ENCODE measurements at regions of chr6 and their contacts with region 1.

Region 1: DNA sequence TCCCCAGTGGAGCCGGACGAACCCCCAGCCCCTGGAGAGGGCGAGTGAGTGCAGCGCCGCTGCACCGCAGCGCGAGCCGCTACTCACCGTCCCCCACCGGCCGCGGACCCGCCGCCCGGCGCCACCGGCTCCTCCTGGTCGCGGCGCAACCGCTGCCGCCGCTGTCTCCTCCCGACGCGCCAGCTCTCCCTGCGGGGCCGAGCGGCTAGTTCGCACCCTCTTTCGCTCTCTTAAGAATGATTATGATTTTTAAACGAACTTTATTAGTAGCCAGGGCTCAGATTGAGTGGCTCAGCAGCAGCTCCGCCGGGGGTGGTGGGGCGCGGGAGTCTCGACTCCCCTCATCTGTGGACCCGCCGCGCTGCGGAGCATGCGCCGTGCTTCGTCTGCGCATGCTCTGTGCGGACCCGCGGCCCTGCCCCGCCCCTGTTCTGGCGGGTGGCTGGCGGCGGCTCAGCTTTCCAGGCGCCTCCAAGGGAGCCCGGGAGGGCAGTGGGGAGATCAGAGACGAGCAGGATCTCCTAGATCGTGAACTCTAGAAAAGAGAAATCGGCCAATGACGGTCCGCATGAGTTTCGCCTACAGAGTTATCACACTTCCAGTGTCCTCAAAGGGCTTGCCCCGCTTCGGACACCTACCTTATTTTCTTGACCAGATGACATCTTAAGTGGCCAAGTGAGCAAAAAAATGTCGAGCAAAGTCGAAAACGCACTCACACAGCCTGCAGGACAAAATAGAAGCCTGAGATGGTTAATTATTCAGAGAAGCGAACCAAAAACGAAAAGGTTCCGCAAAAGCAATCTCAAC is at the start of gene RAB23:
- DNase-seq: peak; percentile 70 to 94 (median 87)
- ATAC-seq: peak; percentile 92
- H3K4me3 ChIP-seq: peak within 1 kb of the TSS; percentile 86
- H3K4me3 Mint-ChIP-seq: peak within 1 kb of the TSS; percentile 89 to 100 (median 98)
- H3K27ac ChIP-seq: peak within 1 kb of the TSS; percentile 68
- H3K27ac Mint-ChIP-seq: peak within 1 kb of the TSS; percentile 85 to 95 (median 91)
- H3K4me1 ChIP-seq: no peaks in the 10 kb centered on the region
- H3K4me1 Mint-ChIP-seq: peaks cover 0 to 24% (median 10%) of the 10 kb centered on the region in 7 donors
- H3K27me3 ChIP-seq: no peaks in the 10 kb centered on the region
- H3K27me3 Mint-ChIP-seq: peaks cover 6 to 43% (median 13%) of the 10 kb centered on the region in 5 donors
- total RNA-seq, gene RAB23: 0.50 to 3.2 (median 2.0) TPM

Region 2: DNA sequence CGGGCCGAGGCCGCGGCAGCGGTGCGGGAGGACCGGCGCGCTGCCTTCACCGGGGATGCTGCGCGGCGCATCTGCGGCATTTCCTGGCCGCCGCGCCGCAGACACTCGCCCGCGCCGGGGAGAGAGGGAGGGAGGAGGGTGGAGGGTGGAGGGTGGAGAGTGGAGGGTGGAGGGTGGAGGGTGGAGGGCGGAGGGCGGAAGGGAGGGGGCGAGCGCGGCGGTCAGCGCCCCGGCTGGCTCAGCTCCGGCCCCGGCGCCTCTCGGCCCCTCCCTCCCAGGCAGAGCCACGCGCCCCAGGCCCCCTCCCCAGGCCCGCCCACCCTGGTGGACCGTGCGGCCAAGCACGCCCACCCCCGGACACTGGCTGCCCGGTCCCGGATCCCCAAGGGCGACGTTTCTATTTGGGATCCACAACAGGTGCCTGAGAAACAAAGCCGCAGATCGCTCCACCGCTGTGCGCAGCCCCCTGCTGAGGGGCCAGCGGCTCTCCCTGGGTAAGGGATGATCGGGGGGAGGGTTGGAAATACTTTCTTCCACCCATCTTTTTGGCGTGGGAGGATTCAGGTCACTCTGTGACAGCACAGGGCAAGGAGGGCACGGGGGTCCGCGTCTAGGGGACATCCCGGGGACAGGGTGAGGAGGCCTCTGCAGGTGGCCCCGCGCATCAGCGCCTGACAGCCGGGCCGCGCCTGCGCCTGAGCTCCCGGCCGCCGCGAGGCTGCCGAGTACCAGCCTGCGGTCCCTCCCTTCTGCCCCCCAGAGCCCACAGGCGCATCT is 378.4 kb before region 1 on chr6:
- CTCF ChIA-PET with region 1: no interaction called
- POLR2A ChIA-PET with region 1: no interaction called
- intact Hi-C with region 1: loop called in 1 of 2 experiments (anchors 5 kb)
- DNase-seq: peak; percentile 34 to 77 (median 57)
- ATAC-seq: peak; percentile 92
- H3K4me3 ChIP-seq: peak overlapping the region; percentile 45
- H3K4me3 Mint-ChIP-seq: peak overlapping the region; percentile 55 to 83 (median 78)
- H3K27ac ChIP-seq: no peak overlapping the region
- H3K27ac Mint-ChIP-seq: peak overlapping the region in 2 of 9 donors; percentile 14 to 45
- H3K4me1 ChIP-seq: peaks cover 0 to 7% of the 10 kb centered on the region in 2 donors
- H3K4me1 Mint-ChIP-seq: peaks cover 6 to 20% (median 11%) of the 10 kb centered on the region in 7 donors
- H3K27me3 ChIP-seq: no peaks in the 10 kb centered on the region
- H3K27me3 Mint-ChIP-seq: peaks cover 39 to 66% (median 57%) of the 10 kb centered on the region in 5 donors

Region 3: GRCh38 chr6:57048577-57048976 is 173.6 kb before region 1 on chr6:
- CTCF ChIA-PET with region 1: no interaction called
- POLR2A ChIA-PET with region 1: no interaction called
- intact Hi-C with region 1: loop called (anchors 2 kb)
- DNase-seq: no peak
- ATAC-seq: no peak
- H3K4me3 ChIP-seq: no peak overlapping the region
- H3K4me3 Mint-ChIP-seq: peak overlapping the region; percentile 46 to 84 (median 68)
- H3K27ac ChIP-seq: no peak overlapping the region
- H3K27ac Mint-ChIP-seq: peak overlapping the region in 6 of 9 donors; percentile 14 to 75 (median 58)
- H3K4me1 ChIP-seq: peaks cover 0 to 9% of the 10 kb centered on the region in 2 donors
- H3K4me1 Mint-ChIP-seq: peaks cover 21 to 41% (median 32%) of the 10 kb centered on the region in 7 donors
- H3K27me3 ChIP-seq: no peaks in the 10 kb centered on the region
- H3K27me3 Mint-ChIP-seq: peaks cover 0 to 24% (median 0%) of the 10 kb centered on the region in 5 donors

Region 4: GRCh38 chr6:57089687-57090460 is 132.3 kb before region 1 on chr6 and contains the start of gene ZNF451:
- CTCF ChIA-PET with region 1: no interaction called
- POLR2A ChIA-PET with region 1: no interaction called
- intact Hi-C with region 1: loop called (anchors 1 kb)
- DNase-seq: peak; percentile 88 to 97 (median 94)
- ATAC-seq: peak; percentile 96
- H3K4me3 ChIP-seq: peak within 1 kb of the TSS; percentile 64
- H3K4me3 Mint-ChIP-seq: peak within 1 kb of the TSS; percentile 85 to 94 (median 90)
- H3K27ac ChIP-seq: peak within 1 kb of the TSS; percentile 78
- H3K27ac Mint-ChIP-seq: peak within 1 kb of the TSS; percentile 79 to 94 (median 90)
- H3K4me1 ChIP-seq: peaks cover 24% of the 10 kb centered on the region in 2 donors
- H3K4me1 Mint-ChIP-seq: peaks cover 22 to 44% (median 34%) of the 10 kb centered on the region in 7 donors
- H3K27me3 ChIP-seq: no peaks in the 10 kb centered on the region
- H3K27me3 Mint-ChIP-seq: no peaks in the 10 kb centered on the region
- total RNA-seq, gene ZNF451: 63.4 to 116 (median 96.6) TPM

Region 5: GRCh38 chr6:57172136-57173055 is 49.7 kb before region 1 on chr6 and contains the start of gene BAG2:
- CTCF ChIA-PET with region 1: interaction called, 3 read pairs
- POLR2A ChIA-PET with region 1: interaction called, 10 read pairs
- intact Hi-C with region 1: loop called (anchors 1 kb)
- DNase-seq: peak; percentile 75 to 91 (median 85)
- ATAC-seq: peak; percentile 91
- H3K4me3 ChIP-seq: peak within 1 kb of the TSS; percentile 57
- H3K4me3 Mint-ChIP-seq: peak within 1 kb of the TSS; percentile 88 to 99 (median 92)
- H3K27ac ChIP-seq: peak within 1 kb of the TSS; percentile 87
- H3K27ac Mint-ChIP-seq: peak within 1 kb of the TSS; percentile 90 to 99 (median 93)
- H3K4me1 ChIP-seq: peaks cover 4 to 12% of the 10 kb centered on the region in 2 donors
- H3K4me1 Mint-ChIP-seq: peaks cover 10 to 61% (median 56%) of the 10 kb centered on the region in 7 donors
- H3K27me3 ChIP-seq: no peaks in the 10 kb centered on the region
- H3K27me3 Mint-ChIP-seq: no peaks in the 10 kb centered on the region
- total RNA-seq, gene BAG2: 3.7 to 8.1 (median 5.1) TPM

Region 6: GRCh38 chr6:57201718-57202117 is 20.4 kb before region 1 on chr6:
- CTCF ChIA-PET with region 1: no interaction called
- POLR2A ChIA-PET with region 1: no interaction called
- intact Hi-C with region 1: loop called in 1 of 2 experiments (anchors 2 kb)
- DNase-seq: no peak
- ATAC-seq: no peak
- H3K4me3 ChIP-seq: no peak overlapping the region
- H3K4me3 Mint-ChIP-seq: no peak overlapping the region
- H3K27ac ChIP-seq: no peak overlapping the region
- H3K27ac Mint-ChIP-seq: no peak overlapping the region
- H3K4me1 ChIP-seq: no peaks in the 10 kb centered on the region
- H3K4me1 Mint-ChIP-seq: peaks cover 0 to 7% (median 0%) of the 10 kb centered on the region in 7 donors
- H3K27me3 ChIP-seq: no peaks in the 10 kb centered on the region
- H3K27me3 Mint-ChIP-seq: no peaks in the 10 kb centered on the region

Measured in naive thymus-derived CD4-positive, alpha-beta T cell (primary cell).